Motor neuron (in vitro differentiated cells): ENCODE measurements at regions of chrX and their contacts with region 1.

Region 1: DNA sequence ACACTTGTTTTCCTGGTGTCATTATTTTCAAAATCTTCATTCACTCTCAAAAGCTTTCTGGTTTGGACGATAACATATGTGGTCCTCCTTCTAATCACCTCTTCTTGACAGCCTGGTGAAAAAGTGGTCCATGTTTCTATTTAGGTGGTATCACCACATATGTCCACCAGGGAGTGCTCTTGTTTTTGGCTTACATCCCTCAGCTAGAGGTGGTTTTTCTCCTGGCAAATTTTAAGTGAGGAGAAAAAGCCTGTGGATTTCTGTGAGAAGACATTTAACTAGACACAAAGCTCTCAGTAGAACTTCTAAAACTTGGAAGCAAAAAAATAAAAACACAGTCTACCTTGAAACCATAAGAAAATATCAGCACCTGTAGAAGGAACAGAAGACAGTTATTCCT is 58.0 kb upstream of the FRMPD4 start:
- ATAC-seq: peak in 1 of 8 experiments; percentile 23
- H3K4me3 ChIP-seq: no peak overlapping the region
- H3K27ac ChIP-seq: no peak overlapping the region
- H3K4me1 ChIP-seq: no peaks in the 10 kb centered on the region

Region 2: DNA sequence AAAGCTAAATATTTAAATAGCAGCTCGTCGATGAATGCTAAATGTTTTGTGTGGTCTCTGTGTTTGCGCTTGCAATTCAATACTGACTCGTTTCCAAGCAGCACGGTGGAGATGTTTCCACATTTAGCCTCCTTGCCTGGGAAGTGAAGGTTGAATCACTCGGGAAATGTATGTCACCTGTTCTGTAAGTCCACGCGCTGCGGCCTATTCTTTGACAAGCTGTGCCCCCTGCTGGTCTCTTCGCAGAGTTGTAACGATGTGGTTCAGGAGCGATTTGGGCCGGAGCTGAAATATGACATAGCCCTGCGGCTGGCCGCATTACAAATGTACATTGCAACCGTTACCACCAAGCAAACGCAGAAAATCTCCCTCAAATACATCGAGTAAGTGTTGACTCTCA is 621.4 kb after region 1 on chrX:
- in situ Hi-C with region 1: loop called in 1 of 9 experiments (anchors 25 kb)
- ATAC-seq: peak; percentile 32 to 86 (median 72)
- H3K4me3 ChIP-seq: no peak overlapping the region
- H3K27ac ChIP-seq: no peak overlapping the region
- H3K4me1 ChIP-seq: no peaks in the 10 kb centered on the region